ENCODE measurements at regions of chr4 and their contacts with region 1.

Region 1: DNA sequence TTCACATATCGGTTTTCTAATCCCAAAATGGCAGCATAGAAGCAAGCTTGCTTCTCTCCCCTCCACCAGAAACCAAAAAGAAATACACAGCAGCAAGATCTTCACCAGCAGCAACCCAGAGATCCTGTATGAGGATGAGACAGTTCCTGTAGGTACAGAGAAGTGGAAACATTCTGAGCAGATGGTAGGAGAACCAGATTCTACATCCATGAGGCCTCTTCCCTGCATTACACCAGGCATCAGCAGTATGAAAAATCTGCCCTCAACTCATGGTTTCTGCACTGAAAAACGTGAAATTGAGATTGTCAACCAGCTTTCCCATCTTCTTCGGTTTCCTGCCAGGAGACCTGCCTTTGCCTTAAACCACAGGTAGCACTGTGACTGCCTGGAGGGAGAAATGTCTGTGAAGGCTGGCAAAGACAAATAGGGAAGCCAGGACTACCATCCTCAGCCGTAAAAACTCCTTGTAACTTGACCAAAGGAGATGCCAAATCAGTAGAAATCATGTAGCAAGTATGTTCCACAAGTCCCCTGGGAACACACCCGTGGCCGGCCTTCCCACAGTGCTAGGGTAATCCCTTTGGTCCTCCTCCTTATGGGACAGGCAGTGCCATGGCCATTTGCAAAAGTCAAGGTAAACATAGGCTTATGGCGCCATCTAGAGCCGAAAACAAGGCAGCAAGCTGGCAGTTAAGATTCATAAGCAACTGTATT is 24.0 kb upstream of the MTHFD2L start:
- DNase-seq: peak; percentile 68
- ATAC-seq: no peak
- H3K4me3 Mint-ChIP-seq: no peak overlapping the region
- H3K27ac Mint-ChIP-seq: no peak overlapping the region
- H3K4me1 Mint-ChIP-seq: no peaks in the 10 kb centered on the region
- H3K27me3 Mint-ChIP-seq: peaks cover 5% of the 10 kb centered on the region

Region 2: DNA sequence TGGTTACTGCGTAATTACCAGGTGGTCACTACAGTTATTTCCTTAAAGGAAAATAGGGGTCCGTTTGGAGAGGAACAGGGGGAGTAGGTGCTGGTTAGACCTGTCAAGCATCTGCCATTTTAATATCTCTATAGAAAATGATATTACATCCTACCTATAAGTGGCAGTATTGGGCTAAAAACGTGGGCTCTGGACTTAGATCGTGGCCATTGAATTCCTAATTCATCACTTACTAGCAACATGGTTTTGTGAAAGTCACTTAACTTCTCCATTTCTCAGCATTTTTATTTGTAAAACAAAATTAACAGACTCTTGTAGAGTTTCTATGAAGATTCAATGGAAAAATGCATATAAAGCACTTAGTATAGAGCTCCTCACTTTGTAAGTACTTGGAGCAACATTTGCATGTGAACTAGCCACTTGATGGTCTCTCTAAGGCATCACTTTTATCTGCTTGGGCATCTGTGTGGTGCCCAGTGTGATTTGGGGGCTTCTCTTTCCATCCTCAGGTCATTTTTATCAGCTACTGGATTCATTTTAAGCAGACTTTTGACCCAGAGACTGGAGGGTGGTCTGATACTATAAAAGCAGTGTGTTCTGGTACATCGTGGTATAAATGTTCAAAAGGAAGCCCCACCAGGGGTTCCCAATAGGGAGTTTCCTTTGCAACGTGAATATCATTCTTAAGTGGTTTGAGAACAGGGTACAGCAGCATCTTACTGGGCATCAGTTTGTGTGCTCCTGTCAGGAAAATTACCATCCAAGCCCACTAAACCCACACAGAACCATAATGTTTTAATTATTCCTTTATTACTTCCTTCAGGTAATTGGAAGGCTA is 471.0 kb before region 1 on chr4:
- CTCF ChIA-PET with region 1: interaction called, 19 read pairs
- POLR2A ChIA-PET with region 1: no interaction called
- DNase-seq: no peak
- ATAC-seq: no peak
- H3K4me3 Mint-ChIP-seq: no peak overlapping the region
- H3K27ac Mint-ChIP-seq: no peak overlapping the region
- H3K4me1 Mint-ChIP-seq: no peaks in the 10 kb centered on the region
- H3K27me3 Mint-ChIP-seq: peaks cover 3% of the 10 kb centered on the region

Region 3: DNA sequence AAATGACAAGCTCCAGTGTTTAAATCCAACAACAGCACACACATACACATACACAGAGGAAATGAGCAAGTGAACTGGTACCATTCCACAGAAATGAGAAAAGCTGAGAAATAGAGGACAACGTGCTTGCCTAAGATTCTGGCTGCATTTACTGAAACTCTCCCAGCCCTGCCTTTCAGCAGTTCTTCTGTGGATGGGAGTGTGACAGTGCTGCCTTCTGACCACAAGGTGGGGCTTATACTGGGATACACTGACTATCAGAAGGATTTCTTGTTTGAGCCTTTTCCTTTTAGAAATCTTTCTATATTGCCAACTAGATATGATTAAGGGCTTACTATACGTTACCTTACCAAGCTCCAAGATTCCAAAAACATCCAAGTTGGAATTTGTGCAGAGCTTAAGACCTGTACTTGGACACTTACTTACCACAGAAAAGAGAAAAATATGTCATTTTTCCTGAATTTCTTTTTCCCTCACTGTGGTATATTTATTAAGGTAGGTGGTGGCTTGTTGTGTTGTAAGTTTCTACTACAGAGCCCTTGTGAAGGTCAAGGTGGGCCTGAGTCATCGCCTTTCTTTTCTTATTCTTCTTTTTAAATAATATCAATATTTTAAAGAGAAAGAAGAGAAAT is 404.3 kb before region 1 on chr4:
- CTCF ChIA-PET with region 1: interaction called, 10 read pairs
- POLR2A ChIA-PET with region 1: no interaction called
- DNase-seq: peak; percentile 21
- ATAC-seq: no peak
- H3K4me3 Mint-ChIP-seq: no peak overlapping the region
- H3K27ac Mint-ChIP-seq: no peak overlapping the region
- H3K4me1 Mint-ChIP-seq: no peaks in the 10 kb centered on the region
- H3K27me3 Mint-ChIP-seq: no peaks in the 10 kb centered on the region

Region 4: GRCh38 chr4:74072739-74073138 is 61.2 kb before region 1 on chr4:
- CTCF ChIA-PET with region 1: no interaction called
- POLR2A ChIA-PET with region 1: no interaction called
- DNase-seq: no peak
- ATAC-seq: no peak
- H3K4me3 Mint-ChIP-seq: no peak overlapping the region
- H3K27ac Mint-ChIP-seq: no peak overlapping the region
- H3K4me1 Mint-ChIP-seq: no peaks in the 10 kb centered on the region
- H3K27me3 Mint-ChIP-seq: no peaks in the 10 kb centered on the region

Region 5: DNA sequence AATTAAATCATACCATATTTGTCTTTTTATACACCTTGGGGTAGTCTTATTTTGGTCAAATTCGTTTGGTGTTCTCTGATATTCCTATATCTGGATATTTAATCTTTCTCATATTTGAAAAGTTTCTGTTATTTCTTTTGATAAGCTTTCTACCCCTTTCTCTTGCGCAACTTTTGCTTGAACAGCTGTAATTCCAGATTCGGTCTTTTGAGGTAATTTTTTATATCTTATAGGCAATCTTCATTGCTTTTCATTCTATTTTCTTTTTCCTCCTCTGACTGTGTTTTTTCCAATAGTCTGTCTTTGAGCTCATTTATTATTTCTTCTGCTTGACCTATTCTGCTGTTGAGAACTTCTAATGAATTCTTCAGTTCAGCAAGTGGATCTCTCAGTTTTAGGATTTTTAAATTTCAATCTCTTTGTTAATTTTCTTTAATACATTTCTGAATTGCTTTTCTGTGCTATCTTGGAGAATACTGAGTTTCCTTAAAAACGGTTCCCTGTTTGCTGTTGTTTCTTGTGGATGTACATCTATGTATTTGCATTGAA is 12.7 kb after region 1 on chr4:
- CTCF ChIA-PET with region 1: interaction called, 10 read pairs
- POLR2A ChIA-PET with region 1: no interaction called
- DNase-seq: no peak
- ATAC-seq: no peak
- H3K4me3 Mint-ChIP-seq: no peak overlapping the region
- H3K27ac Mint-ChIP-seq: no peak overlapping the region
- H3K4me1 Mint-ChIP-seq: no peaks in the 10 kb centered on the region
- H3K27me3 Mint-ChIP-seq: peaks cover 30% of the 10 kb centered on the region

Region 6: GRCh38 chr4:74166135-74166534 is 32.2 kb after region 1 on chr4:
- CTCF ChIA-PET with region 1: no interaction called
- POLR2A ChIA-PET with region 1: no interaction called
- DNase-seq: no peak
- ATAC-seq: no peak
- H3K4me3 Mint-ChIP-seq: no peak overlapping the region
- H3K27ac Mint-ChIP-seq: no peak overlapping the region
- H3K4me1 Mint-ChIP-seq: no peaks in the 10 kb centered on the region
- H3K27me3 Mint-ChIP-seq: no peaks in the 10 kb centered on the region